ENCODE measurements at regions of chr5 and their contacts with region 1.

Region 1: GRCh38 chr5:45038366-45038987 is 229.7 kb downstream of the MRPS30 start:
- DNase-seq: no peak
- H3K4me3 ChIP-seq: no peak overlapping the region
- H3K27ac ChIP-seq: no peak overlapping the region
- H3K4me1 ChIP-seq: no peaks in the 10 kb centered on the region
- H3K27me3 ChIP-seq: no peaks in the 10 kb centered on the region
- CTCF ChIP-seq: peak in 5 of 6 experiments; percentile 33 to 63 (median 45)
- POLR2A ChIP-seq: no peak

Region 2: GRCh38 chr5:44697025-44697424 is 341.5 kb before region 1 on chr5:
- intact Hi-C with region 1: no loop called
- DNase-seq: no peak
- H3K4me3 ChIP-seq: no peak overlapping the region
- H3K27ac ChIP-seq: no peak overlapping the region
- H3K4me1 ChIP-seq: no peaks in the 10 kb centered on the region
- H3K27me3 ChIP-seq: no peaks in the 10 kb centered on the region
- CTCF ChIP-seq: no peak
- POLR2A ChIP-seq: no peak

Region 3: GRCh38 chr5:44935262-44935661 is 103.2 kb before region 1 on chr5:
- intact Hi-C with region 1: no loop called
- DNase-seq: no peak
- H3K4me3 ChIP-seq: no peak overlapping the region
- H3K27ac ChIP-seq: no peak overlapping the region
- H3K4me1 ChIP-seq: no peaks in the 10 kb centered on the region
- H3K27me3 ChIP-seq: no peaks in the 10 kb centered on the region
- CTCF ChIP-seq: peak in 1 of 6 experiments; percentile 17
- POLR2A ChIP-seq: no peak

Region 4: DNA sequence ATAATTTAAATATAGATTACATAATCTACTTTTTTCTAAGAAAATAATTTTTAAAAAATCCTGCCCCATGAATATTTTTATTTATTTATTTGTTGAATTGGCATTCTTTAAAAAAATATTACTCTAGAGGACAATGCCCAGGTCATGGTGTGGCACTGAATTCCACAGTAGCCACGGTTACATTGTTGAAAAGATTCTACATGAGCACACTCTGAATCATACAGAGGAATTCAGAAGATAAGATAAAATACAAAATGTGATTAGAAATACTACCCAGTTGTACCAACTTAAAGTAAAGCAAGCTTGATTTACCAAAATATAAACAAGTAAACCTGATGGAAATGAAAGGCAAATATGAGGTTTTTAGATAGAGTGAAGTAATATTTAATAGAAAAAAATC is 474.0 kb after region 1 on chr5:
- intact Hi-C with region 1: loop called (anchors 10 kb)
- DNase-seq: no peak
- H3K4me3 ChIP-seq: no peak overlapping the region
- H3K27ac ChIP-seq: no peak overlapping the region
- H3K4me1 ChIP-seq: no peaks in the 10 kb centered on the region
- H3K27me3 ChIP-seq: no peaks in the 10 kb centered on the region
- CTCF ChIP-seq: no peak
- POLR2A ChIP-seq: no peak

Region 5: DNA sequence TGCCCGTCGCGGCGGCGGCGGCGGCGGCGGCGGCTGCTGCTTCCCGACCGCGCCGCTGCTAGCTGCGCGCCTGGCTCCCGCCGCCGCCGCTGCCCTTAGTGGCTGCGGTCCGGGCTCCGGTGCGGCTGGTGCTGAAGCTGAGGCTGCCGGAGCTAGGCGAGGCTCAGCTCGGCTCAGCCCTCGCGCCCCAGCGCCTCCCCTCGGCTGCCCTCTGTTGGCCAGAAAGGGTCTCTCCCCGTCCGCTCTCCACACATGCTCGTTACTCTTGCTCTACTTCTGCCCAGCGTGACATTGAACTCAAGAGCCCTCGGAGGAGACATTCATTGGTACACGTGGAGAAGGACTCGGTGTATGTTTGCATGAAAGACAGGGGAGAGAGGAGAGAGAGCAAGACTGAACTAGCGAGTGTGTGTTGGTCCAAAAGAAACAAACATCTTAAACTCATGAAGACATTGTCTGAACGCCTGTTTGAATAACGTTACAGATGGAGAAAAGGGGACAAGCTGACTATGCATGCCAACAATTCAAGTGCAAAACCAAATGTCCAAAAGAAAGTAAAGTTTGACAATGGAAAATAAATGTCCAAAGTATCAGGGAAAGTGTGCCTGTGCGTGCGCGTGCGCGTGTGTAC is 657.8 kb after region 1 on chr5 and contains the start of gene HCN1:
- intact Hi-C with region 1: loop called (anchors 5 kb)
- DNase-seq: no peak
- H3K4me3 ChIP-seq: peak within 1 kb of the TSS; percentile 5 to 61 (median 36)
- H3K27ac ChIP-seq: no peak within 1 kb of the TSS
- H3K4me1 ChIP-seq: peaks cover 4 to 14% (median 9%) of the 10 kb centered on the region in 3 donors
- H3K27me3 ChIP-seq: peaks cover 3 to 56% (median 8%) of the 10 kb centered on the region in 4 donors
- CTCF ChIP-seq: peak in 5 of 6 experiments; percentile 46 to 73 (median 55)
- POLR2A ChIP-seq: no peak
- total RNA-seq, gene HCN1: 0.19 TPM in 1 of 4 donors, not detected in the others